ENCODE measurements at regions of chr16 and their contacts with region 1.

Region 1: DNA sequence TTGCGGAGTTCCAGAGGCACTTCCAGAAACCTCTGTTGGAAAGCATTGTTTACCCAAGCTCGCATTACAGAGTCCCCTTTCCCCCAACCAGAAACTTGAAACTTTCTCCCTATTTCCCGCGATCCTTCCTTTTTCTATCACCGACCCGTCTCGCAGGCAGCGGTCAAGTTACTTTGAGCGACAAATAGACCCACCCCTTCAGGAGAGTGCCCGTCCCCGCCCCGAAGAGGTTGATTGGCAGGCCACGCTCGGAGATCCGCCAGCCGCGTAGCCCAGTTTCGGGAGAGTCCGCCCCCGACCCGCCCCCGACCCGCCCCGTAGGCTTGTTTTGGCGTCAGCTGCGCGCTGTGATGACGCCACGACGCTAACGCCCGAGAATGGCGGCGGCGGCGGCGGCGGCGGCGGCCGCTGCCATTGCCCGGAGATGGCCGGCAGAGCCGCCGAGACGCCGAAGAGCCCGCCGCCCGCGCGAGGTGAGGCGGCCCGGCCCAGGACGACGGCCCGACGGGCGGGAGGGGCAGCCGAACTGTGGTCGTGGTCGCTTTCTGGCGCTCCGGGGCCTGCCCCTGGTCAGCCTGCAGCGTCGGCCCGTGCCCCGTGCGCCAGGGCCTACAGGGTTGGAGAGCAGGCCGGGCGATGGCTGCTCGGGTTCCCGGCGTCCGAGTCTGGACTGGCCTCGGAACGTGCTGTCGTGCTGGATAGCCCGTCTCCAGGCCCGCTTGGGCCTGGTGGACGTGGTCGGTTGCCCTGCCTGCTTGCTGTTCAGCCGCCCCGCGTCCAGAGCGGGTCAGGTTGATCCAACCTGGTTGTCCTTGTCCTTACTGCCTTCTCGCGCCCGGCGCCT is at the start of gene PSKH1:
- DNase-seq: peak; percentile 97 to 99 (median 97)
- ATAC-seq: peak; percentile 95
- H3K4me3 ChIP-seq: peak within 1 kb of the TSS; percentile 95
- H3K27ac ChIP-seq: peak within 1 kb of the TSS; percentile 91
- H3K4me1 ChIP-seq: peaks cover 8 to 26% of the 10 kb centered on the region in 2 experiments; a peak in 4 of 5 replicates
- H3K27me3 ChIP-seq: no peaks in the 10 kb centered on the region
- CTCF ChIP-seq: no peak
- EP300 ChIP-seq: 0 out of 2 replicates have a peak, but pooled peaks have one; percentile 1
- POLR2A ChIP-seq: peak; percentile 47
- RAD21 ChIP-seq: no peak
- polyA plus RNA-seq, gene PSKH1: 0.96 to 1.0 TPM

Region 2: GRCh38 chr16:67860650-67861389 is 32.3 kb before region 1 on chr16:
- CTCF ChIA-PET with region 1: no interaction called
- POLR2A ChIA-PET with region 1: no interaction called
- in situ Hi-C with region 1: no loop called
- intact Hi-C with region 1: no loop called
- DNase-seq: peak in 1 of 4 experiments; percentile 41
- ATAC-seq: peak; percentile 10; the same call in 1 of the 3 replicates
- H3K4me3 ChIP-seq: no peak overlapping the region
- H3K27ac ChIP-seq: peak overlapping the region; percentile 23; the same call in 1 of the 3 replicates
- H3K4me1 ChIP-seq: peaks cover 19 to 29% of the 10 kb centered on the region in 2 experiments
- H3K27me3 ChIP-seq: no peaks in the 10 kb centered on the region
- CTCF ChIP-seq: no peak
- EP300 ChIP-seq: no peak
- POLR2A ChIP-seq: no peak
- RAD21 ChIP-seq: no peak

Region 3: GRCh38 chr16:67907397-67908180 is 14.5 kb after region 1 on chr16:
- CTCF ChIA-PET with region 1: no interaction called
- POLR2A ChIA-PET with region 1: interaction called, 13 read pairs
- in situ Hi-C with region 1: no loop called
- intact Hi-C with region 1: no loop called
- DNase-seq: no peak
- ATAC-seq: no peak
- H3K4me3 ChIP-seq: no peak overlapping the region
- H3K27ac ChIP-seq: no peak overlapping the region
- H3K4me1 ChIP-seq: peaks cover 0 to 6% of the 10 kb centered on the region in 2 experiments; a peak in 1 of 5 replicates
- H3K27me3 ChIP-seq: no peaks in the 10 kb centered on the region
- CTCF ChIP-seq: no peak
- EP300 ChIP-seq: no peak
- POLR2A ChIP-seq: no peak
- RAD21 ChIP-seq: no peak